ENCODE measurements at regions of chr19 and their contacts with region 1.

Region 1: DNA sequence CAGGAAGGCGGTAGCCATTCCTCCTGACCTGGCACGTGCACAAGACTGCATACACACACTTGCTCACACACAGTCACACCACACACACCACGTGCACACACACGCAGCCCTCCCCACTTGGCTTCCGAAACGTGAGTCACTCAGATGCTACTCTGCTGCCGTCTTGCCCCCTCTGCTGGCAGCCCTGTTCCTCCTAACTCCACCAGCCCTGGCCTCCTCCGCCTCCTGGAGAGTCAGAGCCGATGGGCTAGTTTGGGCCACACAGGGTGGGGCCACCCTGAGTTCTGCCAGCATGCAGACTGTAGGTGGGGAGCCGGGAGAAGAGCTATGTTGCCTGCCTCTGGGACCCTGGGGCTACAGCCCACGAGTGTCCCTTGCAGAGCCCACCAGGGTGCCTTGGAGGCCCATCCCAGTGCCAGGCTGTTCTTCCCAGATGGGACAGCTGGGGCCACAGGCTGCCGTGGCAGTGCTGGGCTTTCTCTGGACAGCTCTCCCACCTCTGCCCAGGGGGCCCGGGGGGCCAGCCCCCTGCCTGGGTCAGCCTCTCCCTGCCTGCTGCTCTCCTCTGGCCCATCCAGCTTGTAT is 12.1 kb downstream of the PIN1 start:
- DNase-seq: peak; percentile 75
- H3K4me3 ChIP-seq: no peak overlapping the region
- CTCF ChIP-seq: peak; percentile 95

Region 2: GRCh38 chr19:9741476-9742171 is 105.6 kb before region 1 on chr19:
- CTCF ChIA-PET with region 1: no interaction called
- POLR2A ChIA-PET with region 1: no interaction called
- DNase-seq: no peak
- H3K4me3 ChIP-seq: no peak overlapping the region
- CTCF ChIP-seq: no peak

Region 3: DNA sequence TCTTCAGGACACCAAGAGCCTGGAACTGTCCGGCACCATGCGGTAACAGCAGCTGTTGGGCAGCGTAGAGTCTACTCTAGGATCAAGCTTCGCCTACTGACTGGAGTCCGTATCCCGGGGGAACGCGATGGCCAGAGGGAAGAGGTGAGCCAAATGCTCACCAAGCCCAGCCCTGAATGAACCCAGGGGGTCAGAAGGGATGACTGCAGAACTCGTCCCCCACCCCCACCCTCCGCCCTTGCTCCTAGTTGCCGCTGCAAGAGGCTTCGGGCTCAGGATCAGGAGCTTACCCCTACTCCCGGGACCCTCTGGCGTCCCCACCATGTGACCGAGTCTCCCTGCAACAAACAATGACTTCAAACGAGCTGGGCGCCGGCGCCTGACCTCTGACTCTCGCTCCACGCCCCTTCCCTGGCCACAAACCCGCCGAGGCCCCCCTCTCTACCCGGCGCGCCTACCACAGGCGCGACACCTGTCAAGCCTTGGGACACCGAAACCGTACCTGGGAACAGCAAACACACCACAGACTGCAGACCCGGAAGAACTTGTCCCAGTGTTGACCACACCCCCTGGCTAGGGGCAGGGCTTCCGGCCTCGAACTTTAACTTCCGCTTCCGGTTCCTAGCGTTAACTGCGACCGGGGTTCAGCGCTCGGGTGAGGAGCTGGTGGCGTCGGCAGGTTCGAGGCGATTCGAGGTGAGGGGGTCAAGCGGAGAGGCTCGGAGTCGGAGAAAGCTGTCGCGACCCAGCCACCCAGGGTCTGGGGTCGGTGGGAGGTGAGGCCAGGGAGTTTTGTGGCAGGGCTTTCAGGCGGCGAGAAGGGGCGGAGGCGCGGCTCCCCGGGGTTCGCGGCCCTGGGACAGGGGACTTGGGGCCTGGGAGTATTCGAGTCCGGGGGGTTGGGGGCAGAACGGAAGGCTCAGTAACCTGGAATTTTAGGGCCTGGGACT is 19.6 kb before region 1 on chr19 and contains the start of gene UBL5:
- CTCF ChIA-PET with region 1: interaction called, 10 read pairs
- POLR2A ChIA-PET with region 1: no interaction called
- DNase-seq: no peak
- H3K4me3 ChIP-seq: peak within 1 kb of the TSS; percentile 96
- CTCF ChIP-seq: no peak

Region 4: DNA sequence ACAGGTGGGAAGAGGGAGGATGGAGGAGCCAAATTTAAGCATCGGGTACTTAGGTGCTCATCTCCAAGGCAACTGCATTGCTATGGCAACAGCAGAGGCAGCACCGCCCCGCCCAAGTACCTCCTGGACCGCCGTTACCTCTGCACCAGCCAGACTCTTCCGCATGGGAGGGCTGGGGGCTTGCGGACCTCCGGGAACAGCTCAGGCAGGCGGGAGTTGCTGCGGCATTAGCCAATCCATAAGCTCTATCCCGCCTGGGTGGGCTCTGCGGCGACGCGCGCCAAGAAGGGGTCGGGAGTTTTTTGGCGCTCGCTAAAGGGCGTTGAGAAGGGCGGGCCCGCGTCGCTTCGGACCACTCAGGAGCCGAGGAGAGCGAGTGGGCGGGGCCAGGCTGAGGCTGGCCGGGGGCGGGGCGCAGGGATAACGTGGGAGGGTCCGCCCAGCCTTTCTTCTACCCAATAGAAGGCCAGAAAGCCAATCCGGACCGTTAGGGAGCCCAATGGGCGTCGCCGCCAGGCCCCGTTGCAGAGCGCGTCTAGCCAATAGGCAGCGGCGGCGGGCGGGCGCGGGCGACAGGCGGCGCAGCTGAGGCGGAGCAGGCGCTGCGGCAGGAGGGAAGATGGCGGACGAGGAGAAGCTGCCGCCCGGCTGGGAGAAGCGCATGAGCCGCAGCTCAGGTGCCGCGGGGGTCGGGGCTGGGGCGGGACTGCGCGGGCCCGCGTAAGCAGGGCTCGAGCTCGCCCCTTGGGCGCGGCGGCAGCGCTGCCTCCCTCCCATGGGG is 12.3 kb before region 1 on chr19 and contains the start of gene PIN1:
- CTCF ChIA-PET with region 1: interaction called, 69 read pairs
- POLR2A ChIA-PET with region 1: no interaction called
- DNase-seq: peak; percentile 82
- H3K4me3 ChIP-seq: peak within 1 kb of the TSS; percentile 88
- CTCF ChIP-seq: peak; percentile 72

Region 5: DNA sequence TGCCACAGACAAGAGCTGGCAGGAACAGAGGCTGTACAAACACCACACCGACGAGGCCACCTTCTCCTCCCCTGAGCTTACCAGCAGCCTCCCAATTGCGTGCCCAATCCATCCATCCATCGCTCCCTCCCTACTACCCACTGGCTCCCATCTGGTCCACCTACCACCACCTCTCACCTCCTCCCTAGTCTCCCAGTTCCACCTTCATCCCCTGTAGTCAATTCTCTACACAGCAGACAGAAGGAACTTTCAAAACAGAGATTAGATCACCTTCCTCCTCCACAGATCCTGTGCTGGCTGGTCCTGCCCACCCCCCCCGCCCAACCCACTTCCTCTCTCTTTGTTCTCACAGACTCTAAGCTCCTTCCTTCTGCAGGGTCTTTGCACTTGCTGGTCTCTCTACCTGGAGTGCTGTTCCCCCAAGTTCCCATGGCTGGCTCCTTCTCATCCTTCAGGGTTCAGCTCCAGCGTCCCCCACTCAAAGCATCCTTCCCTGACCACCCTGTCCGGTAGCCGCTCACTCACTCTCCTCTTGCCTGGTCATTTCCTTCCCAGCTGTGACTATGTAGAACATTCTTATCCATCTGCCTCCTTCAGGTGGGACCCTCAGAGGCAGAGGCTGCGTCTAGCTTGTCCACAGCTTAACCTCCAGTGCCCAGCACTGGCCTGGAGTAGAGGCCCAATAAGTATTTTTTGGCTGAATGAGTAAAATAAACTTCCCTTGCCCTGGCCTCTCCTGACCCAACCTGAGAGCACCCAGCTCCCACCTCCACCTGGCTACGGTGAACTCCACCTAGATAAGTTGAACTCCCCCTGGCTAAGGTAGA is 11.0 kb after region 1 on chr19:
- CTCF ChIA-PET with region 1: interaction called, 23 read pairs
- POLR2A ChIA-PET with region 1: no interaction called
- DNase-seq: no peak
- H3K4me3 ChIP-seq: no peak overlapping the region
- CTCF ChIP-seq: no peak